ENCODE measurements at regions of chr5 and their contacts with region 1.

Region 1: DNA sequence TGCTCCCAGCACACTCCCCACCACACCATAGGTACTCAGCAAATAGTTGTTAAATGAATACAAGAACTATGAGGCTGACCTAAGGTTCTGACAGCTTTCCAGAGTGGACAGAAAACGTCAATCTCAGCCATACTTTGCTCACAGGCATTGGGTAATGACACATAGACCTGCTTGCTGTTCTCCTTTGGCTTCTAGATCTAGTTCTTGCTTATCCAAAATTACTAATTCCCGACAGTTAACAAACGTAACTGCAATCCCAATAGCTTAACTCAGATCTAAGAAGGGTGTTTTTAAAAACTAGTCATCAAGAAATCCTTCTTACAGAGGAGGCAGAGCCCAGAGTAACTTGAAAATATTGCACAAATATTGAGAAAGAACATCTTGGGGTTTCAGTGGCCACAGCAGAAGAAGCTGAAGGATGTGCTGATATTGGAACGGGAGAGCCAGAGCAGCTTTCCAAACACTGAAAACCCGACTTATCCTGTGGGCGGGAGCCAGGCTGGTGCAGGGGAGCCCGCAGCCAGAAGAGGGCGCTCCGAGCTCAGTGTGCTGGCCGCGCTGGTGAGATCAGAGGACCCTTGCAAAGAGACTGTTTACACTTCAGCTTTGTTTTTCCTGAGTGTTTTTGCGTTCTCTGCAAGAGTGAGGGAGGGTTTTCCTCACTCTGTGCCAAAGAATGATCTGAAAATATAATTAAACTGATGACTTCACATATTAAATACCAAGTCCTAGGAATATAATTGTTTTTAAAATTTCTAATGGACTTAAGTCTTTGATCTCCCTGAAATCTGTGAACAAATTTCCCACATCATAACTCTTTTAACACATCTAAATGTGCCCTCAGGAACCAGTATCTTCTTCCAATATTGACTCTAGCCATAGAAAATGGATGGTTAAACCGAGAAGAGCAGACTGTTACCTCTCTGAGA is 30.3 kb downstream of the FGF1 start:
- DNase-seq: peak; percentile 79 to 93 (median 88)
- H3K4me3 ChIP-seq: no peak overlapping the region
- H3K27ac ChIP-seq: no peak overlapping the region
- H3K4me1 ChIP-seq: no peaks in the 10 kb centered on the region
- H3K27me3 ChIP-seq: no peaks in the 10 kb centered on the region
- CTCF ChIP-seq: peak; percentile 85 to 92 (median 88)
- EP300 ChIP-seq: no peak
- POLR2A ChIP-seq: no peak

Region 2: DNA sequence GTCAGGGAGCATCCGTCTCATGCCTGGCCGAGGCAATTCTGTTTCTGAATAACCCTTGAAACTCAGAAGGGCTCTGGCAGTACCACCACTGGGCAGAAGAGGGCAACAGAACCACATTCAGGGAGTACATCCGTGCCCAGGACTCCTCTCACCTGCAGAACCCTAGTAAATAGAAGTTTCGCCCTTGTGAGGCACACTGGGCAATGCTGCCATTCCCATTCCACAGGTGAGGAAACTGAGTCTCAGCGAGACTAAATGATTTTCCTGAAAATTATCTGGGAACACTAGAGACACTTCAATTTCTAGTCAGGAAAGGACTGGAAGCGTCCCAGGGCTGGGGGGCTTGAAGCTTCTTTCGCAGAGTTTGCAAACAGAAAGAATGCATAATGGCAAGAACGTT is 44.4 kb before region 1 on chr5:
- intact Hi-C with region 1: loop called in 1 of 4 experiments (anchors 5 kb)
- DNase-seq: peak; percentile 60 to 83 (median 76)
- H3K4me3 ChIP-seq: no peak overlapping the region
- H3K27ac ChIP-seq: no peak overlapping the region
- H3K4me1 ChIP-seq: no peaks in the 10 kb centered on the region
- H3K27me3 ChIP-seq: no peaks in the 10 kb centered on the region
- CTCF ChIP-seq: peak; percentile 60 to 84 (median 71)
- EP300 ChIP-seq: no peak
- POLR2A ChIP-seq: no peak

Region 3: DNA sequence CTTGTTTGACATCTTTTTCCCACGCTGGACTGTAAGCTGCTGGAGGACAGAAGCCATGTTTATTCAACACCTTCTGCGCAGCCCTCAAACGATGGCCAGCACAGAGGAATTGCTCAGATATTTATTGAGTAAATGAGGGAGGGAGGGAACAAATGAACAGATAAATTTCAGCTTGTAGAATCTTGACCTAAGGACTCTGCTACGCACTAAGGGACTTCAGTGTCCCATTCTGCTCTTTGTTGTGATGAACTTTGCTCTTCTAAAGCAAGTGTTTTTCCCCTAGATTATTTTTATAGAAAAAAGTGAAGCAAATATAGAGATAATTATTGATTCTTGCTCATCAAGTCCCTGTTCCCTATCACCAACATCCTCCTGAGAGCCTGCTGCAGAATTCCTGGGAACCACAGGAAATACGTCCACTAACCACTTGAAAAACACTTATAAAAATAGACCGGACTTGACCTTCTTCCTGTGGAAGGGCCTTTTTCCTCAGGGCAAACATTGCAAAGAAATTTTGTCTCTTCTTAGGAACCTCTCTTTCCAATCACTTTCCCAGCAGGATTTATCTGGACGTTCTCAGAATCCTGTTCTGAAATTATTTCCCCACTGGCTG is 24.6 kb before region 1 on chr5:
- intact Hi-C with region 1: no loop called
- DNase-seq: no peak
- H3K4me3 ChIP-seq: no peak overlapping the region
- H3K27ac ChIP-seq: no peak overlapping the region
- H3K4me1 ChIP-seq: peaks cover 2% of the 10 kb centered on the region
- H3K27me3 ChIP-seq: no peaks in the 10 kb centered on the region
- CTCF ChIP-seq: no peak
- EP300 ChIP-seq: no peak
- POLR2A ChIP-seq: no peak

Region 4: GRCh38 chr5:142699184-142699720 is 43.6 kb after region 1 on chr5:
- intact Hi-C with region 1: loop called (anchors 2 to 5 kb)
- DNase-seq: peak; percentile 77 to 89 (median 87)
- H3K4me3 ChIP-seq: no peak overlapping the region
- H3K27ac ChIP-seq: no peak overlapping the region
- H3K4me1 ChIP-seq: peaks cover 11% of the 10 kb centered on the region
- H3K27me3 ChIP-seq: no peaks in the 10 kb centered on the region
- CTCF ChIP-seq: peak; percentile 59 to 91 (median 82)
- EP300 ChIP-seq: no peak
- POLR2A ChIP-seq: peak; percentile 24

Region 5: DNA sequence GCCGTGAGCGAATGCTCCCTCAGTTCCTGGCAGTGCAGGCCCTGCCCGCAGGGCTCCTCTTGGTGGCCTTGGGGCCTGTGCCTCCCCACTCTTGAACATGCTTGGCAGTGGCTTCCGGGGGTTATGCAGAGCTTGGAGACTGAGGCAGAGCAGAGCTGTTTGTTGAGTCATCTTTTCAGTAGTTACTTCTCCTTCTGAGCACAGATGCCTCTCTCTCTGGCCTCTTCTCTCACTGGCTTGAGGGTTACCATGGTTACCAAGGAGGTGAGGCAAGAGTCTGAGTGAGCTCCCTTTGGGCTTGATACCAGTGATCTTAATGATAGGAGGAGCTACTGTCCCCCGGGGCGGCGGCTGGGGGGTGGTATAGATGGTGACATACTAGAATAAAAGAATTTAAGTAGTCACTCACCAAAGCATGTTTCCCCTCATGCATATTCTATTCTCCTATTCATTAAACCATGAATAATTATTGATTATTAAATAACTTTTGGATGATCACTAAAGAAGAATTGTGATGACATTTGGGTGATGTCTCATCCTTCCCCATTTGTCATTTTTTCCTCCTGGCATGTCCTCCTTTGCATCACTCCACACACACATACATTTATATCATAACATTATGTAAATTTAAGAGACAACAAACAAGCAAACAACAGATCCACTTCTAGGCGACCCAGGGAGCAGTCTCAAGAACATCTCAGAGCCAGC is 225.6 kb after region 1 on chr5:
- intact Hi-C with region 1: loop called in 1 of 4 experiments (anchors 5 kb)
- DNase-seq: no peak
- H3K4me3 ChIP-seq: no peak overlapping the region
- H3K27ac ChIP-seq: no peak overlapping the region
- H3K4me1 ChIP-seq: no peaks in the 10 kb centered on the region
- H3K27me3 ChIP-seq: no peaks in the 10 kb centered on the region
- CTCF ChIP-seq: no peak
- EP300 ChIP-seq: no peak
- POLR2A ChIP-seq: no peak

Region 6: GRCh38 chr5:143413958-143414669 is 758.5 kb after region 1 on chr5:
- intact Hi-C with region 1: no loop called
- DNase-seq: no peak
- H3K4me3 ChIP-seq: no peak overlapping the region
- H3K27ac ChIP-seq: no peak overlapping the region
- H3K4me1 ChIP-seq: no peaks in the 10 kb centered on the region
- H3K27me3 ChIP-seq: no peaks in the 10 kb centered on the region
- CTCF ChIP-seq: no peak
- EP300 ChIP-seq: no peak
- POLR2A ChIP-seq: no peak

Region 7: GRCh38 chr5:144135113-144135762 is 1479.6 kb after region 1 on chr5:
- intact Hi-C with region 1: no loop called
- DNase-seq: no peak
- H3K4me3 ChIP-seq: no peak overlapping the region
- H3K27ac ChIP-seq: no peak overlapping the region
- H3K4me1 ChIP-seq: no peaks in the 10 kb centered on the region
- H3K27me3 ChIP-seq: no peaks in the 10 kb centered on the region
- CTCF ChIP-seq: no peak
- EP300 ChIP-seq: no peak
- POLR2A ChIP-seq: no peak